Activated T-helper 1 cell treated with anti-CD3 and anti-CD28 coated beads, Interleukin-12 subunit alpha, Interleukin-12 subunit beta, Interleukin-2, Interleukin-4 antibody, amounts not matched to agents 30 ng/mL and 10 ng/mL and 1 ng/mL, durations not matched to agents 14 hours and 24 hours and 36 hours (primary cell): ENCODE measurements at regions of chrX and their contacts with region 1.

Region 1: DNA sequence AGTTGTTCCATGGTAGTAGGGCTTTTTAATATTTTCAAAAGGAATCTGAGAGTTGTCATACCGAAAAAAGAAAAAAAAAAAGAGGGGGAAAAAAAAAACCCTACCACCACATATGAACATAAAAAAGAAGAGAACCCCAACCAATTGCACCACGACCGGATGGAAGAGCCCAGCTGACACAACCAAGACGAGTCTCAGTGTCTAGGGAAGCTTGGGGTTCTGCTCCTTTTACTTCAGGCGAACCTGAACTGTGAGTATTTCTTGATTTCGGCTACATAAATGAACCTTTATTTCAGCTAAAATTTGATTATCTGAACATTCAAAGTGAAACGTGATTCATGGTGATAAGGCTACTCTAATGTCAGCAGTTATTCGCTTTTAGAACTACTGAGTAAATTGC is at the start of gene GPR34:
- DNase-seq: no peak
- H3K4me3 Mint-ChIP-seq: peak within 1 kb of the TSS; percentile 48
- H3K27ac Mint-ChIP-seq: peak within 1 kb of the TSS; percentile 63
- H3K4me1 Mint-ChIP-seq: peaks cover 39% of the 10 kb centered on the region
- H3K27me3 Mint-ChIP-seq: no peaks in the 10 kb centered on the region
- total RNA-seq, gene GPR34: 0.66 and 1.2 TPM in 2 replicates

Region 2: DNA sequence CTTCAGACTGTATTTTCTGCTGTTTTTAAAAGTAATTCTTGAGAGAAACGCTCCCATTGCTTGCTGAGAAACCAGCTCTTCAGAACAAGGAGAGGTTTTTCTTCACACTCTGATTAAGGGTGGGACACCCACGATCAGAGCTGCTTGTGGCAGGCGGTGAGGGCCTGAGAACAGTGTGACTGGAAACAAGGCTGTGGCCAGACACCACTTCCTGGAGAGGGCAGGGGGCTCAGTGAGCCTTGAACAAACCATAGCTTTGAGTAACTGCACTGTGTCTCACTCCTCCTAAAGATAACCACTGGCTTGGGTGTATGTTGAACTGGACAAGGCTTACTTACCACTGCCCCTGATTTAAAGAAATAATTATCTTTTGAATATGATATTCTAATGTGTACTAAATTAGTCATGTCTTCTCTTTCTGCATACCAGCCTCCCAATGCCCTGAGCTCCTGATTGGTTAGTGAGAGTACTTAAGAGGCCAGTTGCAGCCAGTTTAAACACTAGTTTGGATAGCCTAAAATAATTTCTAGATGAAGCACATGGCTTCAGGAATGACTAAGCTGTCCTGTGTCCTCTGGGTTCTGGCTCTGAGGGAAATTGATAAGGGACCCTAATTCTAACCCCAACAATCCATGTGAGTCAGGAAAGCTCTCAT is 31.4 kb after region 1 on chrX:
- intact Hi-C with region 1: loop called (anchors 5 kb)
- DNase-seq: peak; percentile 23
- H3K4me3 Mint-ChIP-seq: no peak overlapping the region
- H3K27ac Mint-ChIP-seq: peak overlapping the region; percentile 82
- H3K4me1 Mint-ChIP-seq: peaks cover 61% of the 10 kb centered on the region
- H3K27me3 Mint-ChIP-seq: no peaks in the 10 kb centered on the region